ENCODE measurements at regions of chr22 and their contacts with region 1.

Region 1: DNA sequence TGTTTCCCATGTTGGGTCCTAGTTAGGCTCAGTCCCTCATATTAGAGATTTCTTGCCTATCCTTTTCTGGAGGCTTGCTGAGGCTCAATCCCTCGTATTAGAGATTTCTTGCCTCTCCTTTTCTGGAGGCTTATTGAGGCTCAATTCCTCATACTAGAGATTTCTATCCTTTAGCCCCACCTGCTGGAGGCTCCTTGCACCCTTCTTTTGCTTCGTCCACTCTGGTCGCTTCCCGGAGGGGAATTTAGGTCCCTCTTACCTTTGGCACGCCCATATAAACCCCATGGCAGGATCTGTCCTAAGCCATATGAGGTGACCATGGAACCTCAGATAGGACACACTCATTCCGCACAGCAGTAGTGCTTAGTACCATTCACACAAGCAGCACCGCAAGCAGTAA is 15.9 kb downstream of the CYP2D6 start:
- DNase-seq: no peak
- H3K4me3 ChIP-seq: no peak overlapping the region
- H3K27ac ChIP-seq: no peak overlapping the region
- H3K4me1 ChIP-seq: no peaks in the 10 kb centered on the region
- H3K27me3 ChIP-seq: no peaks in the 10 kb centered on the region
- CTCF ChIP-seq: peak; percentile 17 to 47 (median 44)
- EP300 ChIP-seq: no peak
- POLR2A ChIP-seq: no peak

Region 2: DNA sequence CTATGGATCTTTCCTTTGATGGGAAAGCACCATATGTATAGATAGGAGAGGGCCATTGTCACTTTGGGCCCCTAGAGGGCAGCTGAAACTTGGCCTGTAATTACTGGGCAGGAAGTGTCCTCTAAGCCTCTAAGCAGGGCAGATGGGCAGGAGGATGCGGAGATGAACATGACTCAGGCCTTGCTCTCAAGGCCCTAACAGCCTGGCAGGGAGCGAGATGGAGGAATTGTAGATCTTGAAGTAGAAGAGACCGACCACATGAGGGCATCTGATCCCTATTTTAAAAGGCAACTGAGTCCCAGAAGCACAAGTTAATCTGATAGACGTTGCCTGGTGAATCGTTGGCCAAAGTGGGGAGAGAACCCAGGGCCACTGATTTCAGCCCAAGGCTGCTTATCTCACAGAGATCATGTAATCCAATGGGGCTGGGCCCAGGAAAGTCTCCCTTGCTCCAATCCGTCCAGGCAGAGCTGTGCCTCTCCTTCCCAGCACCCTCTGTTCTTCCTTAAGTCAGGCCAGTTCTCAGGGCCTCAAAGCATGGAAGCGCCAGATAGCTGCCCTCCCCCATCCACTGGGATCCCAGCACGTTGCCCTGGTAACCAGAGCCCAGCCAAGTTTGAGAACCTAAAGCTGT is 148.0 kb before region 1 on chr22:
- intact Hi-C with region 1: loop called (anchors 10 kb)
- DNase-seq: no peak
- H3K4me3 ChIP-seq: no peak overlapping the region
- H3K27ac ChIP-seq: no peak overlapping the region
- H3K4me1 ChIP-seq: peaks cover 0 to 5% (median 0%) of the 10 kb centered on the region in 4 donors
- H3K27me3 ChIP-seq: peaks cover 0 to 16% (median 1%) of the 10 kb centered on the region in 4 donors
- CTCF ChIP-seq: peak in 2 of 3 experiments; percentile 18 to 24
- EP300 ChIP-seq: no peak
- POLR2A ChIP-seq: no peak

Region 3: DNA sequence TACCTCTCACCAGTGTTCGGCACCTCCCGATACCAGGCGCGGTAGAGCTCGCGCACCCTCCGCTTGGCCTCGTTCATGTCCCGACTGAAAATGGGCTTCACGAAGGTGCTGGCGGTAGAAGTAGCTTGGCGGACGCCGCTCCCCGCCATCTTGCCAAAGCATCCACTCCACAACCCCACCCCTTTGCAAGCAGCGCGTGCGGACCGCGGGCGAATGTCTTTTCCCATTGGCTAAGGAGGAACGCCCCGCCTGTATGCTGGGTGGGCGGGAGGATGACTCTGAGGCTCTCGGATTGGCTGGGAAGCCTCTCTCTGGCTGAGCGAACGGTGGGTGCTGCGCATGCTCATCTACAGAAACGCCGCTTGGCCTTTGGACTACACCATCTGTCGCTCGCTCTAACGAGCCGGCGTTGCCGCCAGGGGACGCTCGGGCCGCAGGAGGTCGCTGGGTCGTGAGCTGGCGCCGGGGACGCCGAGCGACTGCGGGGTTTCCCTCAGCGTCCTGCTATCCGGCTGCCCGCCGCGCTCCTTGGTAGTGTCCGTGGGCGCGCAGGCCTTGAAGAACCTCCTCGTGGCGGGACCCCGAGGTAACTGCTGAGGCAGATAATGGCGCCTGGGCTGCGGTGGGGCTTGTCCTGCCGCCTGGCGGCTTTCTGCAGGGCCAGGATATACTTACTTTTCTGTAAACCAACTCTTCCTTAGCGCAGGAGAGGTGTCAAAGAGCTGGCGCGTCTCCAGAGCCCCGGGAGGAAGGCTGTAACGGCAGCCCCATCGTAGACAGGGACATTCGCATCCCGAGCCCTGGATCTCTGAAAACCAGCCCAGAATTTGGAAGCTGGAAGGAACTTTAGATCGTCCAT is 23.9 kb before region 1 on chr22 and contains the start of gene NDUFA6:
- intact Hi-C with region 1: loop called (anchors 1 kb)
- DNase-seq: peak; percentile 100
- H3K4me3 ChIP-seq: peak within 1 kb of the TSS; percentile 80 to 99 (median 89)
- H3K27ac ChIP-seq: peak within 1 kb of the TSS; percentile 96 to 99 (median 98)
- H3K4me1 ChIP-seq: peaks cover 20 to 53% (median 36%) of the 10 kb centered on the region in 4 donors
- H3K27me3 ChIP-seq: no peaks in the 10 kb centered on the region
- CTCF ChIP-seq: peak; percentile 90 to 94 (median 90)
- EP300 ChIP-seq: no peak
- POLR2A ChIP-seq: peak; percentile 59
- total RNA-seq, gene NDUFA6: 54.0 to 90.9 (median 75.8) TPM

Region 4: DNA sequence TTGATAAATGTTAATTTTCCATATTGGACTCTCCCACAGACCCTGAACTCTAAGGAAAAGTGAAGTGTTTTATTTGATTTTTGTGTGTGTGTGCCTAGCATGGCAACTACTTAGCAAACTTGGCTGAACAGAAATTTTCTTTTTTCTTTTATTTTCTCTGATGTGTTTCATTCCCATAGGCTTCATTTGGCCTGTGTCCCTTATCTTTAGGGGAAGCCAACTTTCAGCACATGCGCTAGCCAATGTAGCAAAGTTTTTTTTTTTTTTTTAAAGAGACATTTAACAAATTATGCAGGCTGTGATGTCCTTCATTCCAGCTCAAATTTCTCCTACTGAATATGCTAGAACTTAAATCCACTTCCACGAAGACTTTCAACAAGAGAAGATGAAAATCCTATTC is 141.5 kb after region 1 on chr22:
- intact Hi-C with region 1: no loop called
- DNase-seq: no peak
- H3K4me3 ChIP-seq: no peak overlapping the region
- H3K27ac ChIP-seq: no peak overlapping the region
- H3K4me1 ChIP-seq: peaks cover 0 to 48% (median 32%) of the 10 kb centered on the region in 4 donors
- H3K27me3 ChIP-seq: no peaks in the 10 kb centered on the region
- CTCF ChIP-seq: no peak
- EP300 ChIP-seq: no peak
- POLR2A ChIP-seq: no peak

Region 5: DNA sequence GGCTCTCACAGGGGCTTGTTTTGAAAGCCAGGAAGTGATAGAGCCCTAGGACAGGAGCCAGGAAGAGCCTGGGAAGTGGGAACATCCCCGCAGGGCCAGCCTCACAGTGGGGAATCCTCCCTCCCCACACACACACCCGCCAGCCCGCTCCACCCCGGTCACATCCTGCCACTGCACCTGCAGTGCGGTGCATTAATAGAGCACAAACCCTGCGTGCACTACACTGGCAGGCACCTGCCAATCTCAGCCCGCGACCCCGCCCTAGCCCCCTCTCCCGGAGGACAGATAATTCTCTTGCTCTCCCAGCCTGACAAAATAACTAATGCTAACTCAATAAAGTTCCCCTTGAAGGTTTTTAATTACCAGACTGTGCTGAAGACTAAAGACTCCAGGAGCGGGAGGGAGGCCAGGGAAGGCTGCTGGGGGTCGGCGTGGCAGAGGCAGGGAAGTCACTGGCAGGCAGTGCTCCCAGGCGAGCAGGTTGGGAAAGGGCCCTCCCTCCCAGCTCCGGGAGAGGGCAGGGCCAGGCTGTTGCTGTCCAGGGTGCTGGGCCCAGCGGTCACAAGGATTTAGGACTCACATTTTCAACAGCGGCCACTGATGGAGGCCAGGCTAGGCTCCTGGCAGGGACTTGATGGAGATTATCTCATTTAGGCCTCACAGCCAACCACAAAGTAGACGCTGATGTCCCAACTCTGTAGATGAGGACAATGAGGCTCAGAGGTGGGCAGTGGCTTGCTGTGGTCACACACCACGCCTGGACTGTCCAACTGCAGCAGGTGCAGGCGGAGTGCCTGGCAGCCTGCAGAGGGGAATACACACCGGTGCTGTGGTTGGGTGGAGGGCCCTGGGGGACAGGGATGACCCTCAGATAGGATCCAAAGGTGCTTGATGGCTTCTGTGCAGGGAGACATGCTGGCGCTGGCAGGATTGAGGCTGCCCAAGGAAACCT is 179.6 kb after region 1 on chr22:
- intact Hi-C with region 1: no loop called
- DNase-seq: no peak
- H3K4me3 ChIP-seq: no peak overlapping the region
- H3K27ac ChIP-seq: no peak overlapping the region
- H3K4me1 ChIP-seq: peaks cover 7 to 20% (median 14%) of the 10 kb centered on the region in 4 donors
- H3K27me3 ChIP-seq: no peaks in the 10 kb centered on the region
- CTCF ChIP-seq: no peak
- EP300 ChIP-seq: no peak
- POLR2A ChIP-seq: no peak

Measured in esophagus muscularis mucosa (tissue), 4 donors.